ENCODE measurements at regions of chr1 and their contacts with region 1.

Region 1: GRCh38 chr1:44217809-44218410 is 4.6 kb downstream of the DMAP1 start:
- DNase-seq: peak; percentile 87 to 93 (median 87)
- ATAC-seq: peak; percentile 68
- H3K4me3 ChIP-seq: no peak overlapping the region
- H3K27ac ChIP-seq: peak overlapping the region; percentile 19 to 52 (median 44)
- H3K4me1 ChIP-seq: peaks cover 22% of the 10 kb centered on the region
- H3K27me3 ChIP-seq: no peaks in the 10 kb centered on the region
- CTCF ChIP-seq: peak; percentile 69 to 94 (median 92)
- POLR2A ChIP-seq: peak in 1 of 3 donors; percentile 5

Region 2: DNA sequence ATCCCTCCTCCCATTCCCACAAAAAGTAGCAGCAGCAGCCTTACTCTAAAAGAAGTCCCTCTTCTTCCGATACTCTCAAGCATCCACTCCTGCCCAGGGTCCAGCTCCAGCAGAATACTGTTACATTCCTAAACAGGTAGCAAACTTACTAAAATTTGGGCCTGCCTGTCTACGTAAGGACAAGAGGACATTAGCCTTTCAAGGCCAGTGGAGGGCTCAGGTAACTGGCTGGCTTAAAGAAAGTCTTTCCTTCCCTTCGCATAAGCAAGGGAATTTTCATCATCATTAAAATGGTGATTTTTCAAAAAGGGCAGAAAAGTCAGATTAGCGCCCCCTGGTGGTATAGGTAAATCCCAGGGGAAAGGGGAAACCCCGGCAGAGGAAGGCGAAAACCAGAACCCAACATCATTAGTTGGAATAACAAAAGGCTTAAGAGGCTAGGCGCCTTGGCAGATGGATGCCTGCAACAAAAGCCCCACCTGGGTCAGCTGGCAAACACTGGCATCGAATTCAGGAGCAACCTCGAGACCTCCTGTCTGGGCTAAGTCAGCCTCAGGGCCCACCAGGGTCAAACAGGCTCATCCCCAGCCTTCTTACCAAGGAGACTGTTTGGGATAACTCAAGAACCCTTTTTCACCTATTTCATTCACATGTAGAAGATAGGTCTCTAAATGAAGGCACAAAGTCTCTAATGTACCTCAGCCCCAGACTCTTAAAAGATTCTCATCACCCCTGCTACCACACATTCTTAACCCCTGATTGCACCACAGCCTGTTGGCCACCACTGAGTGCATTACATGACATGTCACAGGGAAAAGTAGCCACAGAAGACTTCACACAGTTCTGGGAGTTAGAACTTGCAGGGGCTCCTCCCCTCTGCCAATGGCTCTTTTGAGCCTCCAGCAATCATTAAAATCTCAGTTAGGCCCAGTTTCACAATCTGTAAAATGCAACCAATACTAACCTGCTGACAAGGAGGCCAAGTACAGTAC is 100.5 kb after region 1 on chr1:
- intact Hi-C with region 1: loop called (anchors 5 kb)
- DNase-seq: peak; percentile 46 to 53 (median 50)
- ATAC-seq: peak; percentile 20
- H3K4me3 ChIP-seq: no peak overlapping the region
- H3K27ac ChIP-seq: no peak overlapping the region
- H3K4me1 ChIP-seq: peaks cover 7% of the 10 kb centered on the region
- H3K27me3 ChIP-seq: no peaks in the 10 kb centered on the region
- CTCF ChIP-seq: peak; percentile 71 to 94 (median 75)
- POLR2A ChIP-seq: no peak

Region 3: GRCh38 chr1:44433209-44433608 is 215.3 kb after region 1 on chr1:
- intact Hi-C with region 1: no loop called
- DNase-seq: no peak
- ATAC-seq: no peak
- H3K4me3 ChIP-seq: no peak overlapping the region
- H3K27ac ChIP-seq: no peak overlapping the region
- H3K4me1 ChIP-seq: no peaks in the 10 kb centered on the region
- H3K27me3 ChIP-seq: no peaks in the 10 kb centered on the region
- CTCF ChIP-seq: no peak
- POLR2A ChIP-seq: no peak

Region 4: GRCh38 chr1:44587796-44588460 is 370.0 kb after region 1 on chr1:
- intact Hi-C with region 1: loop called (anchors 10 kb)
- DNase-seq: peak in 1 of 4 donors; percentile 40
- ATAC-seq: no peak
- H3K4me3 ChIP-seq: no peak overlapping the region
- H3K27ac ChIP-seq: no peak overlapping the region
- H3K4me1 ChIP-seq: no peaks in the 10 kb centered on the region
- H3K27me3 ChIP-seq: no peaks in the 10 kb centered on the region
- CTCF ChIP-seq: no peak
- POLR2A ChIP-seq: no peak

Region 5: GRCh38 chr1:44645476-44646244 is 427.8 kb after region 1 on chr1:
- intact Hi-C with region 1: loop called (anchors 10 kb)
- DNase-seq: no peak
- ATAC-seq: no peak
- H3K4me3 ChIP-seq: no peak overlapping the region
- H3K27ac ChIP-seq: no peak overlapping the region
- H3K4me1 ChIP-seq: no peaks in the 10 kb centered on the region
- H3K27me3 ChIP-seq: no peaks in the 10 kb centered on the region
- CTCF ChIP-seq: no peak
- POLR2A ChIP-seq: no peak